ENCODE measurements at regions of chr12 and their contacts with region 1.

Region 1: DNA sequence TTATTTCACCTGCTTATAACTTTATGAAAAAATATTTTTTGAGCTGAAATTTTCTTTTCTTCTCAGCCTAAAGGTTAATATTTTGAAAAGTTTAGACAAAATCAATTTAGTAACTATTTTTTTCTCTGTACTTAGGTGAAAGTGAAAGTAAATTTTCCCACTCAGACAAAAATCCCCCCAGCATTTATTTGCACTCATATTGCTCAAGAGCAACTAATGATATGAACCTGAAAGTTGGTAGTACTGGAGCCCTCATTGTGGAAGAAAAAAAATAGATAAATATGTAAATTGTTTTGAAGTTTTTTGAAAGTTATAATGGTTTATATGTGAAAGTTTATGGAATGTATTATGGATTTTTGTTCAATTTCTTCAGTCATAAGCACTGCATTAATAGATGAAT is 1005.9 kb upstream of the ATXN7L3B start:
- DNase-seq: no peak
- H3K4me3 ChIP-seq: no peak overlapping the region
- H3K27ac ChIP-seq: no peak overlapping the region
- H3K4me1 ChIP-seq: no peaks in the 10 kb centered on the region
- H3K27me3 ChIP-seq: no peaks in the 10 kb centered on the region
- CTCF ChIP-seq: no peak

Region 2: GRCh38 chr12:73486256-73486655 is 45.5 kb before region 1 on chr12:
- CTCF ChIA-PET with region 1: no interaction called
- POLR2A ChIA-PET with region 1: no interaction called
- intact Hi-C with region 1: loop called (anchors 5 kb)
- DNase-seq: peak; percentile 17
- H3K4me3 ChIP-seq: no peak overlapping the region
- H3K27ac ChIP-seq: no peak overlapping the region
- H3K4me1 ChIP-seq: peaks cover 4% of the 10 kb centered on the region
- H3K27me3 ChIP-seq: no peaks in the 10 kb centered on the region
- CTCF ChIP-seq: no peak

Region 3: GRCh38 chr12:73506611-73507010 is 25.1 kb before region 1 on chr12:
- CTCF ChIA-PET with region 1: no interaction called
- POLR2A ChIA-PET with region 1: no interaction called
- intact Hi-C with region 1: no loop called
- DNase-seq: no peak
- H3K4me3 ChIP-seq: no peak overlapping the region
- H3K27ac ChIP-seq: no peak overlapping the region
- H3K4me1 ChIP-seq: no peaks in the 10 kb centered on the region
- H3K27me3 ChIP-seq: no peaks in the 10 kb centered on the region
- CTCF ChIP-seq: no peak

Measured in A673 (cell line).